ENCODE measurements at regions of chr2 and their contacts with region 1.

Region 1: GRCh38 chr2:162123806-162124758 is 28.0 kb downstream of the GCG start:
- DNase-seq: peak; percentile 35
- ATAC-seq: peak; percentile 74
- H3K4me3 ChIP-seq: no peak overlapping the region
- H3K27ac ChIP-seq: no peak overlapping the region
- H3K4me1 ChIP-seq: no peaks in the 10 kb centered on the region
- H3K27me3 ChIP-seq: no peaks in the 10 kb centered on the region
- CTCF ChIP-seq: peak; percentile 57; the same call in 1 of the 2 replicates

Region 2: DNA sequence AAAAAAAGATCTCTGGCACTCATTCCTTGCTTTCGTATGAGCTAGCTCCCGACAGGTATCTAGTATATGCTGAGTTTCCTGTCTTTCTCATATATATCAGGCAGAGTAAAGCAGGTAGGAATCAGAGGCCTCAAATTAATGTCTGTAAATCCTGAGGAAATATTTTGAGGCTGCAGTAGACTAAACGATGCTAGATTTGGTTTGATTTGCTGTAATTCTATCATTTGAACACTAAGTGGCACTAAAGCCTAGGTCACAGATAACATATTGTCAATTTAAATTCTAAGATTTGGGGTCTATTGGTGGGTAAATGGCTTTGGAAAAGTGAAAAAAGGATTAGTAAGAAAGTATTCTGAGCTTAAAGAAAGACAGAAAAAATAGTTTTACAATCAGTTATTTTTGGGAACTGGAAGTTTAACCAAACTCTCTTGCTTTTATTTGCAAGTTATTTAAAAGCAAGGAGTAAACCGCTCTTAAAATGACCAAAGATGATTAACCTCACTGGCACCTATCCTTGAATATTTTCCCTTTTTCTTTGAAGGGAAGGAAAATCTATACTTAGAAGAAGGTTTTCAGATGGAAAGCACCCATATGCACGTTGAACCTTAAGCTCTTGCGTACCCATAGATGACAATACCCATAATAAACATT is 537.4 kb before region 1 on chr2:
- CTCF ChIA-PET with region 1: interaction called, 5 read pairs
- POLR2A ChIA-PET with region 1: no interaction called
- in situ Hi-C with region 1: no loop called
- intact Hi-C with region 1: loop called (anchors 2 kb)
- DNase-seq: peak; percentile 17
- ATAC-seq: peak; percentile 62; the same call in 1 of the 2 replicates
- H3K4me3 ChIP-seq: no peak overlapping the region
- H3K27ac ChIP-seq: no peak overlapping the region
- H3K4me1 ChIP-seq: no peaks in the 10 kb centered on the region
- H3K27me3 ChIP-seq: no peaks in the 10 kb centered on the region
- CTCF ChIP-seq: peak; percentile 75; the same call in 1 of the 2 replicates

Region 3: DNA sequence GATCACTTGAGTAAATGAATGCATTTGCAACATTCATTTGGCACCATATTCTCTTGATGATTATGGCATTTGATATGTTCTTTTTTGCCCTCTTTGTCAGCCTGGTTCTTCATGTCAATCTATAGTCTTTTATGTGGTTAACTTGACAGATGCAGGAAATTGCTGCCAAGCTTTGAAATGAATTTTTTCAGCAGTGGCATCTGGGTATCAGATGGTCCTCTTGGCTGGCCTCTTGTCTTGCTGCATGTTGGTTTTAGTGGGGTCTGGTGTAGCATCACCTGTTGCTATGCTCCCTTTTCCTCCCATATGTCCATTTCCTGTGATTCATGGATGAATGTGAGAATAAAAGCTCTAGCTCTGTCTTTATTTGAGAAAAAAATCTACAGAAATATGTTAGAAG is 170.0 kb before region 1 on chr2:
- CTCF ChIA-PET with region 1: no interaction called
- POLR2A ChIA-PET with region 1: no interaction called
- in situ Hi-C with region 1: no loop called
- intact Hi-C with region 1: loop called (anchors 5 kb)
- DNase-seq: no peak
- ATAC-seq: no peak
- H3K4me3 ChIP-seq: no peak overlapping the region
- H3K27ac ChIP-seq: no peak overlapping the region
- H3K4me1 ChIP-seq: no peaks in the 10 kb centered on the region
- H3K27me3 ChIP-seq: peaks cover 2% of the 10 kb centered on the region; the same call in 1 of the 2 replicates
- CTCF ChIP-seq: no peak

Region 4: DNA sequence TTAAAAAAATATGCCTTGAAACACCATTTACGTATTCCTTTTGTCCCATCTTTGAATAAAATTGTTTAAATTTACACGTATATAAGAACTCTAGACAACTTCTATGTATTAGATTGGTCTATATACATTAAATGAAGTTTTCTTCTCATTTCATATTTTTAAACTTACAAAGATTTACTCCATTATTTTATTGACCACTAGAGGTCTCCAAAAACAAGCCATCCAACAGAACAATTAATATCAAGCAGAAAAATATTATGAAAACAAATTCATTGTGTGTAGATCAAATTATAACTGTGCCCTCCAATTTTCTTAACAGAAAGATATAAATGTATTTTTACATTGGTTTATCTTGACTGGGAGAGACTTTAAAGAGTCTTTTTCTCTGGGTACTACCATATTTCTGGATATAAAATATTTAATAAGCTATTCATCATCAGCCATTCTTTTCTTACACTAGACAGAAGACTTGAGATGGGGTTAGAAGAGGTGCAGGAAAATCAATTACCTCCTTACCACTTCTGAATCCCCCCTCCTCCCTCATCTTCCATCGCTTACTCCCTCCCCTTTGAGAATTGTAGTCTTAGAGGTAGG is 116.5 kb before region 1 on chr2:
- CTCF ChIA-PET with region 1: no interaction called
- POLR2A ChIA-PET with region 1: no interaction called
- in situ Hi-C with region 1: no loop called
- intact Hi-C with region 1: loop called (anchors 2 kb)
- DNase-seq: no peak
- ATAC-seq: no peak
- H3K4me3 ChIP-seq: no peak overlapping the region
- H3K27ac ChIP-seq: no peak overlapping the region
- H3K4me1 ChIP-seq: no peaks in the 10 kb centered on the region
- H3K27me3 ChIP-seq: no peaks in the 10 kb centered on the region; the same call in 1 of the 2 replicates
- CTCF ChIP-seq: peak; percentile 26; the same call in 1 of the 2 replicates